Activated naive CD4-positive, alpha-beta T cell treated with anti-CD3 and anti-CD28 coated beads for 36 hours (primary cell): ENCODE measurements at regions of chr7 and their contacts with region 1.

Region 1: DNA sequence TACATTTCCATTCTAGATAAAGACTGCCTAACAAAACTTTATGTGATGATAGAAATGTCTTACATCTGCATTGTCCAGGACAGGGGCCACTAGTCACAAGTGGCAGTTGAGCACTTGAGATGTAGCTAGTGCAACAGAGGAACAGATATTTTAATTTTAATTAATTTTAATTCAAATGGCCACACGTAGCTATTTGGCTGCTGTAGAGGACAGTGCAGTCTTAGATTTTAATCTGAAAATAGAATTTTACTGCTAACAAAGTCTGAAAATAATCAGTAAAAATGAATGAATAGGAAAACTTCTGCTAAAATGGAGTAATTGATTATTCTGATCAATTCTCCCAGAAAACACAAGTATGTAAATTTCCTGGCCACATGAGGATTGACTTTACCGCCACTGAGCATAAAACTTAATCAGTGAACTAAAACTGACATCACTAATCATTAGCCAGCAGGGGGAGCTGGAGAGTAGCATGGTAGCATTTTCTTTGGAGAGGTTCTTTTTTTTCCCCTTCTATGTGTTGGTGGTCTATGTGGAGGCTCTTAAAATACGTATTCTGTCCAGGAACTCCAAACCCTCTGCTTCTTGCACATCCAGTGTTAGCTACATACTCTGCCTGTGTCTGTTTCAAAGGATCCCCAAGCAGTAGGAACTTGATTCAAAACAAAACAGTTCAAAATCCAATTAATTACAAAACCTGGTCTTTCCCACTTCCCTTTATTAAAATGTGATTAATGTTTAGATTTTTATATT is 52.1 kb downstream of the TSPAN12 start:
- DNase-seq: peak; percentile 67
- H3K4me3 Mint-ChIP-seq: no peak overlapping the region
- H3K27ac Mint-ChIP-seq: no peak overlapping the region
- H3K4me1 Mint-ChIP-seq: no peaks in the 10 kb centered on the region
- H3K27me3 Mint-ChIP-seq: peaks cover 5% of the 10 kb centered on the region

Region 2: DNA sequence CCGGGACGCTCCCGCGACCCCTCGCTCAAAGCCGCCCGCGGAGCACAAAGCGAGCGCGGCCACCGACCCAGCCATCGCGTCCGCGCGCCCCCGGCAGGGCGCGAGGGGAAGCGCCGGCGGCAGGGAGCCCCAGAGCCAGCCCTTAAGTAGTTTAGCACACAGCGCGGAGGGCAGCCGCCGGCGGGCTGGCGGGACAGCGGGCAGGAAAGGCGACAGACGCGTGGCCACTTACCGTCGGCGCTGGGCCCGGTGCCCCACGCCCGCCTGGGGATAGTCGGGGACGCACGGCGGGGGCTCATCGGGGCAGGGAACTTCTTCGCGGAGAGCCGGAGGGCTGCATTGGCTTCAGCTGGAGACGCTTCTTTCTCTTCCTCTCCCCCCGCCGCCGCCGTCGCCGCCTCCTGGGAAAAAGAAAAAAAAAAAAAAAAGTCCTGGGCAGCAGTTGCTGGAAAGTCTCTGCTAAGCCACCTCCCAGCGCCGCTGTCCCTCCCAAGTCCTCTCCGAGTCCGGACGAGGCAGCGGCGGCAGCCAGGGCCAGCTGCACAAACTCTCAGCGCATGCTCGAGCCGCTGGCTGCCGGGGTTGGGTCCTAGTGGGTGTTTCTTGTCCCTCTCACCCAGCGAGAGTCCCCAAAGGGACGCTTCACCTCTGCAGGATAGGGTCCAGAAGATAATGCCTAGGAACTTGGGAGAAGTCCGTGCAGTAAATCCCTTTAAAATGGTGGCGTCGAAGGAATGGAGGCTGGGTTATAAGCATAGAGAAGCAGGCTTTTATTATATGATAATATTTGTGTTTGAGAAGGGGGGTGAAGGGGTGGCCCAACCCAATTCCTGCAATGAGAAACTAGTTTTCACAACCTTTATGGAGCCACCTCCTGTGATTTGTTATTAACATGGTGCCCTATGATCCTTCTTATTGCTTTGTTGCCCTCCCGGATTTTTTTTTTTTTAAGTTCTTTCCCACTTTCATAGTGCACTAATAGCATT is 52.1 kb after region 1 on chr7 and contains the start of gene TSPAN12:
- CTCF ChIA-PET with region 1: interaction called, 6 read pairs
- intact Hi-C with region 1: loop called (anchors 1 kb)
- DNase-seq: peak; percentile 59
- H3K4me3 Mint-ChIP-seq: peak within 1 kb of the TSS; percentile 79
- H3K27ac Mint-ChIP-seq: no peak within 1 kb of the TSS
- H3K4me1 Mint-ChIP-seq: peaks cover 11% of the 10 kb centered on the region
- H3K27me3 Mint-ChIP-seq: peaks cover 56% of the 10 kb centered on the region
- total RNA-seq, gene TSPAN12: not detected

Region 3: GRCh38 chr7:120987683-120988590 is 182.1 kb after region 1 on chr7:
- CTCF ChIA-PET with region 1: interaction called, 4 read pairs
- intact Hi-C with region 1: loop called (anchors 2 kb)
- DNase-seq: peak; percentile 89
- H3K4me3 Mint-ChIP-seq: peak overlapping the region; percentile 71
- H3K27ac Mint-ChIP-seq: no peak overlapping the region
- H3K4me1 Mint-ChIP-seq: peaks cover 14% of the 10 kb centered on the region
- H3K27me3 Mint-ChIP-seq: peaks cover 43% of the 10 kb centered on the region

Region 4: GRCh38 chr7:121107923-121108498 is 302.2 kb after region 1 on chr7:
- CTCF ChIA-PET with region 1: interaction called, 8 read pairs
- intact Hi-C with region 1: loop called (anchors 1 kb)
- DNase-seq: no peak
- H3K4me3 Mint-ChIP-seq: no peak overlapping the region
- H3K27ac Mint-ChIP-seq: no peak overlapping the region
- H3K4me1 Mint-ChIP-seq: no peaks in the 10 kb centered on the region
- H3K27me3 Mint-ChIP-seq: peaks cover 11% of the 10 kb centered on the region